ENCODE measurements at regions of chr5 and their contacts with region 1.

Region 1: GRCh38 chr5:142145106-142145900 is 36.7 kb downstream of the NDFIP1 start:
- DNase-seq: peak; percentile 54 to 78 (median 63)
- ATAC-seq: peak; percentile 96
- H3K4me3 ChIP-seq: no peak overlapping the region
- H3K27ac ChIP-seq: no peak overlapping the region
- H3K4me1 ChIP-seq: no peaks in the 10 kb centered on the region
- H3K27me3 ChIP-seq: no peaks in the 10 kb centered on the region
- CTCF ChIP-seq: peak; percentile 71 to 80 (median 79)
- EP300 ChIP-seq: no peak
- POLR2A ChIP-seq: no peak
- RAD21 ChIP-seq: peak; percentile 39 to 62

Region 2: DNA sequence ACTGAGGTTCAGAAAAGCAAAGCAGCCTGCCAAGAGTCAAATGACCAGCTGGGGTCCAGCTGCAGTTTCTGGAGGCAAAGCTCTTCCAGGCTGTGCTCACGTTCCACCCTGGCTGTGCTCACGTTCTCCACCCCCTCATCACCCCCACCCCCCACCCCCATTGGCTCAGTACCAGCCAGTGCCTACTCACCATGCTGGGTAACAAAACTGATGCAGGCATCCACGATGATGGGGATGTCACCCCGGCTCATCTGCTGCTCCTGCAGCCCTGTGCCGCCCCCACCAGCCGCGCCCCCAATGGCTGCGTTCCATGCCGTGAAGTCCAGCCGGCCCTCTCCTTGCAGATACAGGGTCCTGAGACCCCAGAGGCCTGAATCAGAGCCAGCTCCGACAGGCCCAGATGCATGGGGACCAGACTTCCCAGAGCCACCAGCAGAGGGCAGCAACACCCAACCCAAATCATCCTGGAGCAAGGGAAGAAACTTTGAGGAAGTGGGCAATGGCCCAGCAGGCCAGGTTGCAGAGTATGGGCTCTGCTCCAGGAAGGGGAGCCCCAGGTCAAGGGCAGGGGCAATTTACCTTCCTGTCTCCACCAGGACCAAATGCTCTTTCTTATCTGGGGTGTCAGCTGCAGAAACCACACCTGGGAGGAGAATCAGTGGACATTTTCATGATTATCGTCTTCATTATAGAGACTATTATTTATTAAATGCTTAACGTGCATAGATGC is 480.4 kb before region 1 on chr5:
- CTCF ChIA-PET with region 1: interaction called, 5 read pairs
- POLR2A ChIA-PET with region 1: no interaction called
- in situ Hi-C with region 1: no loop called
- intact Hi-C with region 1: loop called (anchors 10 kb)
- DNase-seq: peak; percentile 76 to 86 (median 78)
- ATAC-seq: peak; percentile 97
- H3K4me3 ChIP-seq: no peak overlapping the region
- H3K27ac ChIP-seq: no peak overlapping the region
- H3K4me1 ChIP-seq: peaks cover 5 to 6% of the 10 kb centered on the region in 2 experiments; a peak in 4 of 5 replicates
- H3K27me3 ChIP-seq: no peaks in the 10 kb centered on the region
- CTCF ChIP-seq: peak; percentile 90 to 93 (median 91)
- EP300 ChIP-seq: 0 out of 2 replicates have a peak, but pooled peaks have one; percentile 13
- POLR2A ChIP-seq: no peak
- RAD21 ChIP-seq: peak; percentile 88 to 89

Region 3: DNA sequence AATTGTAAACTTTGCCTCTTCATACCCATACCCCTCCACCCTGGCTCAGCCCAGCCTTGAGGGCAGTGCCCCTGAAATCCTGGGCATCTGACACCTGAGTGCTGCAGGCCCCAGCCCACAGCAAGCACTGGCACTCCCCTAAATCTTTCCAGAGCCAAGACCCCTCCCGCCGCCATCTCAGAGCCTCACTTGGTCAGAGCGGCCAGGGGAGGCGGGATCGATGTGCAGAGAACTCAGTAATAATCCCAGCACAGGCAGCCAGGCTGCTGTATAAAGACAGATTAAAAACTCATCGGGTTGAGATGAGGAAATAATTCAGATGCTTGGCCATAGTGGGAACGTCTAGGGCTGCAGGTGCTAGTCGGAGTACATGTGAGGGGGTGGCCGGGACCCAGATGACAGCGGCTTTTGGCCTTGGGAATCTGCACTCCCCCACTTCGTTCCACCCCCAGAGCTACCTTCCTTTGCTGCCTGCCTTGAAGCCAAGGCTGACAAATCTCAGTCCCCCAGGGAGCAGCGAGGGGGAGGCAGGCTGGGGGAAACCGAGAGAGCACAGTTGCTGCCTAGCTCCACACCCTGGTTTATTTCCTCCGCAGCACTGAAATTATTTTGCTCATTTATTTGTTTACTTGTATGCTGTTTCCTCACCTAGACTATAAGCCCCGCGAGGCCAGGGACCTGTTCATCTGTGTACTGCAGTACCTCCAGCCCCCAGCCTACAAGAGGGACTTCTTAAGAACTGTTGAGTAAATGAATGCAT is 443.8 kb before region 1 on chr5:
- CTCF ChIA-PET with region 1: interaction called, 10 read pairs
- POLR2A ChIA-PET with region 1: no interaction called
- in situ Hi-C with region 1: no loop called
- intact Hi-C with region 1: no loop called
- DNase-seq: no peak
- ATAC-seq: peak; percentile 16; the same call in 2 of the 3 replicates
- H3K4me3 ChIP-seq: no peak overlapping the region
- H3K27ac ChIP-seq: no peak overlapping the region
- H3K4me1 ChIP-seq: peaks cover 0 to 9% of the 10 kb centered on the region in 2 experiments; a peak in 3 of 5 replicates
- H3K27me3 ChIP-seq: peaks cover 21 to 62% of the 10 kb centered on the region in 2 experiments
- CTCF ChIP-seq: no peak
- EP300 ChIP-seq: no peak
- POLR2A ChIP-seq: no peak
- RAD21 ChIP-seq: no peak

Region 4: GRCh38 chr5:141992349-141992963 is 152.8 kb before region 1 on chr5:
- CTCF ChIA-PET with region 1: interaction called, 39 read pairs
- POLR2A ChIA-PET with region 1: interaction called, 12 read pairs
- in situ Hi-C with region 1: no loop called
- intact Hi-C with region 1: loop called (anchors 1 kb)
- DNase-seq: peak; percentile 55 to 79 (median 58)
- ATAC-seq: peak; percentile 91
- H3K4me3 ChIP-seq: no peak overlapping the region
- H3K27ac ChIP-seq: no peak overlapping the region
- H3K4me1 ChIP-seq: no peaks in the 10 kb centered on the region
- H3K27me3 ChIP-seq: no peaks in the 10 kb centered on the region
- CTCF ChIP-seq: peak; percentile 58 to 66 (median 62); a peak in 5 of 6 replicates
- EP300 ChIP-seq: no peak
- POLR2A ChIP-seq: no peak
- RAD21 ChIP-seq: peak; percentile 52 to 69; a peak in 3 of 4 replicates

Region 5: DNA sequence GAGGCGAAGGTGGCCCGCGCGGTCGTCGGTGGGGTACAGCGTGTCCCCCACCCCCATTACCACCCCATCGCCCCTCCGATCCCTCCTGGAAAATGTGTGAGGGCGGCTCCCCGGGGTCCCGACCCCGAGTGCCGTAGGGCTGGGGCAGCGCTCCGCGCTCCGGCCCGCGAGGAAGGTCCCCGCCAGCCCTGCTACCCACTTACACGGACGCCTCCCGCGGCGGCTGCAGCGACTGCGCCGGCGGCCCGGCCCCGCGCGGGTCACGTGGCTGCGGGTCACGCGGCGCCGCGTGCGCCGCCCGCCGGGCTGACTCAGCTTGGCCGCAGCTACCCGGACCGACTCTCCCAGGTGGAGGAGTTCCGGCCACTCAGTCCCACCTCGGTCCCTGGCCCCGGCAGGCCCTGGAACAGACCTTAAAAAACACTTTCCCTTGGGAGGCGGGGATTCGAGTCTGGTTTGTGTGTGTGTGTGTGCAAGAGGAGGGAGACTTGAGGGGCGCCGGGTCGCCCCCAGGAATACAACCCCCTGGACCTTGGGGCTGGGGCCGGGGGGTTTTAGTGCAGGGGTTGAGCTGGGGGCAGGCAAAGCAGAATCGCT is 132.4 kb before region 1 on chr5 and contains the start of gene GNPDA1:
- CTCF ChIA-PET with region 1: interaction called, 5 read pairs
- POLR2A ChIA-PET with region 1: interaction called, 3 read pairs
- in situ Hi-C with region 1: loop called (anchors 5 kb)
- intact Hi-C with region 1: loop called (anchors 1 kb)
- DNase-seq: peak; percentile 89 to 94 (median 92)
- ATAC-seq: peak; percentile 91
- H3K4me3 ChIP-seq: peak within 1 kb of the TSS; percentile 56
- H3K27ac ChIP-seq: peak within 1 kb of the TSS; percentile 91
- H3K4me1 ChIP-seq: peaks cover 32 to 42% of the 10 kb centered on the region in 2 experiments
- H3K27me3 ChIP-seq: no peaks in the 10 kb centered on the region
- CTCF ChIP-seq: peak; percentile 8 to 26 (median 15); a peak in 2 of 6 replicates
- EP300 ChIP-seq: no peak; the same call in 1 of the 2 replicates
- POLR2A ChIP-seq: peak; percentile 89
- RAD21 ChIP-seq: no peak; a peak in 1 of 4 replicates
- polyA plus RNA-seq, gene GNPDA1: 119 to 145 TPM

Region 6: DNA sequence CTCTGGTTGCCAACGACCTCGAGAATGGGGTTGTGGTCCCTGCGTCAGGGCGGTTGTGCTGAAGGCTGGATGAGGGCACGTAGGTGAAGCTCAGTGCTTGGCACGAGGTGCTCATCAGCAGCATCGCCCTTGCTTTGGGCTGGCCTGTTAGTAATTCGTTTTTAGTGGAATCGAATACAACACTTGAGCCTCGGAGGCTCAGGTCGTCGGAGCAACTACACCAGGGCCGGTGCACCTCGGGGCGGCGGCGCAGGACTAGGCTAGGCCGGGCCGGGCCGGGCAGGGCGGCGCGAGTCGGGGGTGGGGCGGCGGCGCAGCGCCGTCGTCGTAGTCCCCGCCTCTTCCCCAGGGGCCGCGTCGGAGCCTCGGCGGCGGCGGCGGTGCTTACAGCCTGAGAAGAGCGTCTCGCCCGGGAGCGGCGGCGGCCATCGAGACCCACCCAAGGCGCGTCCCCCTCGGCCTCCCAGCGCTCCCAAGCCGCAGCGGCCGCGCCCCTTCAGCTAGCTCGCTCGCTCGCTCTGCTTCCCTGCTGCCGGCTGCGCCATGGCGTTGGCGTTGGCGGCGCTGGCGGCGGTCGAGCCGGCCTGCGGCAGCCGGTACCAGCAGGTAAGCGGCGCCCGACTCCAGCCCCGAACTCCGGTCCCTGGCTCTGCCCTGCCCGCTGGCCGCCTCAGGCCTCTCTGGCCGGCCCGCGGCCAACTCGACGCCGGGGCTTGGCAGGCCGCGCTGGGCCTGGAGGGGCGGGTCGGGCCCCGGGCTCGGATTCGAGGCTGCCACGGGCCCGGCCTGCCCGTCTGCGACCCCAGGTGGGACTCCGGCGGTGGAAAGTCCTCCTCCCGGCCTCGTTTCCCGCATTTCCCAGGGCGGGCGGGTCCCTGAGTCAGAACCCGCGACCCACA is 36.6 kb before region 1 on chr5 and contains the start of gene NDFIP1:
- CTCF ChIA-PET with region 1: no interaction called
- POLR2A ChIA-PET with region 1: interaction called, 3 read pairs
- in situ Hi-C with region 1: no loop called
- intact Hi-C with region 1: loop called (anchors 1 kb)
- DNase-seq: peak; percentile 84 to 88 (median 88)
- ATAC-seq: peak; percentile 97
- H3K4me3 ChIP-seq: peak within 1 kb of the TSS; percentile 89
- H3K27ac ChIP-seq: peak within 1 kb of the TSS; percentile 87
- H3K4me1 ChIP-seq: peaks cover 18 to 21% of the 10 kb centered on the region in 2 experiments
- H3K27me3 ChIP-seq: no peaks in the 10 kb centered on the region
- CTCF ChIP-seq: peak; percentile 8 to 53 (median 35); a peak in 2 of 6 replicates
- EP300 ChIP-seq: no peak
- POLR2A ChIP-seq: peak; percentile 80
- RAD21 ChIP-seq: peak; percentile 42 to 51
- polyA plus RNA-seq, gene NDFIP1: 5.3 to 7.6 TPM

Measured in K562 (cell line).